ENCODE measurements at regions of chr1 and their contacts with region 1.

Region 1: DNA sequence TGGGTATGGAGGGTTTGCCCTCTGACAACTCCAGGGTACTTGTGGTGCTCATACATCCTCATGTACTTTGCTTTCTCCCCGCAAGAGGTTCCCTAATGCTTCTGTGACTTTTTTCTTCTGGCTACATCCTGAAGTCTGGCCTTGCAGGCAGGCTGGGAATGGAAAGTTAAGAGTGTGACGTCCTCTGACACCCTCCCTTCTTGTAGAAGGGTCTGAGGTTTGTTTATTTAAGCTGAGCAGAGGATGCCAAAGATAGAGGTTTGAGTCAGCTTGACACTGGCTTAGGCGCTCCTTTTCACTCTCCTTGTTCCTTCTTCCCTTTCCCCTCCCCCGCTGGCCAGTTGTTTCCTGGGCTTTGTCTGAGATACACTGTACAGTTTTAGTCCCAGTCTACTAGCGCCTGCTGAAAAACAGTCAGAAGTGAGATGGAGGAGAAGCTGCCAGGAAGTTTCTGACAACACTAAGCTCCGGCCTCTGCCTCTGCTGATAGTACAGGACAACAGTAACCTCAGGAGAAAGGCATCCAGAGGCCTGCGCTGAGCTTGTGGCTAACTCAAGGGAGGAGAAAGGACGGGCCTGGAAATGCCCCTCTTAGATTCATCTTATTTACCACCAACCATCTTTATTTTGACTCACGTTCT is at the start of gene MACF1:
- DNase-seq: peak; percentile 83
- H3K4me3 Mint-ChIP-seq: peak within 1 kb of the TSS; percentile 90
- H3K27ac Mint-ChIP-seq: peak within 1 kb of the TSS; percentile 92
- H3K4me1 Mint-ChIP-seq: peaks cover 44% of the 10 kb centered on the region
- H3K27me3 Mint-ChIP-seq: no peaks in the 10 kb centered on the region
- total RNA-seq, gene MACF1: 203 and 204 TPM in 2 replicates

Region 2: DNA sequence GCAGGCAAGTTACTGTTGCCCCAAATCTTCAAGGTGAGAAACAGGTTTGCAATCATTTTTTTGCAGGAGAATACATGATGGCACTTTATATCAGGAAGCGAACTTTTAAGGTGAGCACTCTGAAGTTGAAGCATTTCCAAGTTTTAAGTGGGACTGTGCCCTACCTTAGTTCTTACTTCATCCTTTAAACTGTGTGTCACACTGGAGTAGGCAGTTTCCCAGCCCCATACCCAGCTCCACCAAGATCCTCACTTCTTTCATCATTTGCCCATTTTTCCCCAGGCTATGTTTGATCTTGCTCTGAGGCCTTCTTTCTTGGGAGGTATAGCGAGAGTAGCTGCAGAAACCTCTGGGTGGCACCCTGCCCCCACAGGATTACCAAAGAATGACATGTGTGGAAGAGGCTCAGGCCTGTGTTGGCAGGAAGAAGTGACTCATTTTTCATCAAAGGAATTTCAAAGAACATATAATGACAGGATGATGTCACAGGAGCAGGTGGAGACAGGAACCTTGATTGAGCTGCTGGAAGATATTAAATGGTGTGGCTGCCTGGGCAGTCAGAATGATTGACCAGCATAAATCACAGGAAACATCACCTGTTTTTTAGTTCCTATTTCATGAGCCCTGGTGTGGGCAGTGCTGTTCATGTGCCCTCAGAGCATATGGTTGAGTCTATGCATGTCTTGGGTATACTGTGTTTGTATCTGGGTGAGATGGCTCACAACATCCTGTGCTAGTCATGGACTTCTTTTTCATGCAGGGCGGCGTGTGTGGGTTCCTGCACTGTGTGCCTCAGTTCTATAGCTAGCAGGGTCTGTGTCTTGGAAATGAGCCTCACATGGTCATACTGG is 20.8 kb before region 1 on chr1:
- intact Hi-C with region 1: loop called (anchors 1 kb)
- DNase-seq: peak; percentile 94
- H3K4me3 Mint-ChIP-seq: peak overlapping the region; percentile 74
- H3K27ac Mint-ChIP-seq: peak overlapping the region; percentile 97
- H3K4me1 Mint-ChIP-seq: peaks cover 45% of the 10 kb centered on the region
- H3K27me3 Mint-ChIP-seq: no peaks in the 10 kb centered on the region

Region 3: DNA sequence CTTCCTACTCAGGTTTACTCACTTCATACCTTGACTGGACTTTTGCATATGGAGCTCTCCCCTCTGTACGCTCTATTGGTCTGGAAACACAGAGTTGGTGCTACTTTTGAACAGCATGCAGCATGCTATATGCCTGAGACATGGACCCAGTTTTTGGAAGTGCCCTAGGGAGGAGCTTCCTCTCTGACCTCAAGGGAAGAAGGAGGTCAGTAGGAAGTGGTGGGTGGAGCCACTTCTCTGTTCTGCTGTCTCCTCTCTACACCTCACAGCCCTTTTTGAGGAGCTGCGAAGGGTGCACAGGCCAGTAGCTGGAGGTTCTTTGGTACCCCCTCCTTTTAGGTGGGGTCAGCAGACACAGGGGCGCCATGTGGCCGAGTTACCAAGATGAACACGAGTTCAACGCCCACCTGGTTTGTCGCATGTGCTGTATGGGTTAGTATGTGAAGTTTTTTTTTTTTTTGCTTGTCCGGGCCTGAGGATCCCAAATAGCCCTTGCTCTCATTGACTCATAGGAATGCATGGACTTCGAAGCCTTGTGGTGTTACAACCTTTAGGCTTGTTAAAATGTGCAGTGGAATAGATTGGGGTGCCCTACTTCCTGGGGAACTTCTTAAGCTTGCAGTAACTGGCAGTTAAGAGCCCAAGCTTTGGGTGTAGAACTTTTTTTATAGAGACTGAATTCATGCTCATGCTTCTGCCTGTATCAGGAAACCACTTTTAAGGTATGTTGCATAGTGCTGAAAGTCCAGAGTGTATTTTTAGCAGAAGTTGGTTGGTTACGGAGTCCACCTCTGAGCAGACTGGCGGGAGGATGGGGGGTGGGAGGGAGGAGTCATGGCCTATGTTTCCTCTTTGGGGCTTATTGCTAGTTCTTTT is 10.7 kb after region 1 on chr1:
- intact Hi-C with region 1: loop called (anchors 1 kb)
- DNase-seq: peak; percentile 84
- H3K4me3 Mint-ChIP-seq: peak overlapping the region; percentile 82
- H3K27ac Mint-ChIP-seq: peak overlapping the region; percentile 93
- H3K4me1 Mint-ChIP-seq: peaks cover 55% of the 10 kb centered on the region
- H3K27me3 Mint-ChIP-seq: no peaks in the 10 kb centered on the region

Region 4: DNA sequence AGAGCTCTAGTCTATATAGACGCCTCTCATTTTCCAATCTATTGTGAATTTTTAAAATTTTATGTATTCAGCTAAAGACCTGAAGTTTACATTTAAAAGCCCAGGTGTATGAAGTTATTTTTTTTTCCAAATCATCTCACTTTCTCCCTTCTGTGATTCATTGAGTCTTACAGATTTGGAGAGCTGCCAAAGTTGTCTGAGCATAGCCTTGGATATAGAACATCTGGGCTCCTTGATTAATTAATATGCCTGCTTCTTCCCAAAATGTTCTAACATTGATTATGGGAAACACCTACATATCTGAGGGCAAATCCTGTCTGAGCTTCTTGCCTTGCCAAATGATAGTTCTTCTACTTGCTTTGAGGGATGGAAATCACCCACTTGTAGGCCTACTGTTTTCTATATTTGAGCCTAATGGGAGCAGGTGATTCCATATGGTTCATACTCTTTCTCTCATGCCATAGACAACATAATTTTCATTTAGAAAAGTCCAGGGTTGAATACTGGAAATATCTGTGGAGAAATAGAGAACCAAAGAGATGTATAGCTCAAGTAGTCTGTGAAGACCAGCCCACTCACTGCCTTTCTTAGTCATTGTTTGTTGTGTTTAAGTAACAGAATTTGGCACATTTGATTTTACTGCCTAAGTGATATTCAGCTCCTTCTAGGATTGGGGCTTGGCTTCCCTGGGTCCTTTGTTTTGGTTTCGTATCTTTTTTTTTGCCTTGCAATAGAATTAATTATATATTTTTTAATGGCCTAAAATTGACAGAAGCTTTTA is 46.1 kb after region 1 on chr1:
- intact Hi-C with region 1: loop called (anchors 2 kb)
- DNase-seq: no peak
- H3K4me3 Mint-ChIP-seq: no peak overlapping the region
- H3K27ac Mint-ChIP-seq: no peak overlapping the region
- H3K4me1 Mint-ChIP-seq: peaks cover 19% of the 10 kb centered on the region
- H3K27me3 Mint-ChIP-seq: no peaks in the 10 kb centered on the region

Region 5: GRCh38 chr1:39575191-39576015 is 370.8 kb after region 1 on chr1:
- intact Hi-C with region 1: loop called (anchors 10 kb)
- DNase-seq: peak; percentile 84
- H3K4me3 Mint-ChIP-seq: peak overlapping the region; percentile 93
- H3K27ac Mint-ChIP-seq: peak overlapping the region; percentile 90
- H3K4me1 Mint-ChIP-seq: peaks cover 41% of the 10 kb centered on the region
- H3K27me3 Mint-ChIP-seq: no peaks in the 10 kb centered on the region

Measured in activated CD4-positive, alpha-beta T cell treated with anti-CD3 and anti-CD28 coated beads, Interleukin-2, amount 10 ng/mL, durations not matched to agents 24 days and 14 days (primary cell).